CD4-positive, alpha-beta memory T cell (primary cell): ENCODE measurements at regions of chr17 and their contacts with region 1.

Region 1: GRCh38 chr17:60639019-60639330 is 38.7 kb upstream of the BCAS3 start:
- DNase-seq: no peak
- H3K4me3 ChIP-seq: no peak overlapping the region
- H3K4me3 Mint-ChIP-seq: no peak overlapping the region
- H3K27ac ChIP-seq: no peak overlapping the region
- H3K27ac Mint-ChIP-seq: peak overlapping the region in 1 of 7 donors; percentile 51
- H3K4me1 ChIP-seq: no peaks in the 10 kb centered on the region
- H3K4me1 Mint-ChIP-seq: peaks cover 0 to 11% (median 5%) of the 10 kb centered on the region in 4 donors
- H3K27me3 ChIP-seq: no peaks in the 10 kb centered on the region
- H3K27me3 Mint-ChIP-seq: no peaks in the 10 kb centered on the region

Region 2: GRCh38 chr17:60036796-60037612 is 602.0 kb before region 1 on chr17:
- CTCF ChIA-PET with region 1: no interaction called
- POLR2A ChIA-PET with region 1: no interaction called
- intact Hi-C with region 1: loop called (anchors 5 kb)
- DNase-seq: peak; percentile 63 to 69 (median 67)
- H3K4me3 ChIP-seq: no peak overlapping the region
- H3K4me3 Mint-ChIP-seq: no peak overlapping the region
- H3K27ac ChIP-seq: no peak overlapping the region
- H3K27ac Mint-ChIP-seq: peak overlapping the region in 2 of 7 donors; percentile 13 to 53
- H3K4me1 ChIP-seq: no peaks in the 10 kb centered on the region
- H3K4me1 Mint-ChIP-seq: peaks cover 5% of the 10 kb centered on the region in 4 donors
- H3K27me3 ChIP-seq: peaks cover 4% of the 10 kb centered on the region
- H3K27me3 Mint-ChIP-seq: peaks cover 10 to 12% of the 10 kb centered on the region in 2 donors

Region 3: GRCh38 chr17:60571551-60571950 is 67.4 kb before region 1 on chr17:
- CTCF ChIA-PET with region 1: interaction called, 37 read pairs
- POLR2A ChIA-PET with region 1: no interaction called
- intact Hi-C with region 1: loop called (anchors 2 kb)
- DNase-seq: no peak
- H3K4me3 ChIP-seq: no peak overlapping the region
- H3K4me3 Mint-ChIP-seq: no peak overlapping the region
- H3K27ac ChIP-seq: no peak overlapping the region
- H3K27ac Mint-ChIP-seq: no peak overlapping the region
- H3K4me1 ChIP-seq: no peaks in the 10 kb centered on the region
- H3K4me1 Mint-ChIP-seq: peaks cover 0 to 1% (median 0%) of the 10 kb centered on the region in 4 donors
- H3K27me3 ChIP-seq: no peaks in the 10 kb centered on the region
- H3K27me3 Mint-ChIP-seq: peaks cover 2% of the 10 kb centered on the region in 2 donors

Region 4: GRCh38 chr17:60599620-60600489 is 39.1 kb before region 1 on chr17 and contains the start of gene PPM1D:
- CTCF ChIA-PET with region 1: interaction called, 18 read pairs
- POLR2A ChIA-PET with region 1: no interaction called
- intact Hi-C with region 1: loop called (anchors 2 kb)
- DNase-seq: peak; percentile 96 to 97 (median 96)
- H3K4me3 ChIP-seq: peak within 1 kb of the TSS; percentile 97 to 98
- H3K4me3 Mint-ChIP-seq: peak within 1 kb of the TSS; percentile 95 to 99 (median 98)
- H3K27ac ChIP-seq: peak within 1 kb of the TSS; percentile 94
- H3K27ac Mint-ChIP-seq: peak within 1 kb of the TSS; percentile 97 to 98 (median 98)
- H3K4me1 ChIP-seq: peaks cover 37% of the 10 kb centered on the region
- H3K4me1 Mint-ChIP-seq: peaks cover 25 to 57% (median 38%) of the 10 kb centered on the region in 4 donors
- H3K27me3 ChIP-seq: no peaks in the 10 kb centered on the region
- H3K27me3 Mint-ChIP-seq: no peaks in the 10 kb centered on the region
- total RNA-seq, gene PPM1D: 18.9 to 19.4 TPM

Region 5: GRCh38 chr17:60627124-60627523 is 11.9 kb before region 1 on chr17:
- CTCF ChIA-PET with region 1: interaction called, 18 read pairs
- POLR2A ChIA-PET with region 1: no interaction called
- intact Hi-C with region 1: no loop called
- DNase-seq: no peak
- H3K4me3 ChIP-seq: no peak overlapping the region
- H3K4me3 Mint-ChIP-seq: no peak overlapping the region
- H3K27ac ChIP-seq: no peak overlapping the region
- H3K27ac Mint-ChIP-seq: peak overlapping the region in 1 of 7 donors; percentile 75
- H3K4me1 ChIP-seq: no peaks in the 10 kb centered on the region
- H3K4me1 Mint-ChIP-seq: peaks cover 6 to 12% (median 7%) of the 10 kb centered on the region in 4 donors
- H3K27me3 ChIP-seq: no peaks in the 10 kb centered on the region
- H3K27me3 Mint-ChIP-seq: no peaks in the 10 kb centered on the region